MCF 10A (cell line): ENCODE measurements at regions of chr3 and their contacts with region 1.

Region 1: DNA sequence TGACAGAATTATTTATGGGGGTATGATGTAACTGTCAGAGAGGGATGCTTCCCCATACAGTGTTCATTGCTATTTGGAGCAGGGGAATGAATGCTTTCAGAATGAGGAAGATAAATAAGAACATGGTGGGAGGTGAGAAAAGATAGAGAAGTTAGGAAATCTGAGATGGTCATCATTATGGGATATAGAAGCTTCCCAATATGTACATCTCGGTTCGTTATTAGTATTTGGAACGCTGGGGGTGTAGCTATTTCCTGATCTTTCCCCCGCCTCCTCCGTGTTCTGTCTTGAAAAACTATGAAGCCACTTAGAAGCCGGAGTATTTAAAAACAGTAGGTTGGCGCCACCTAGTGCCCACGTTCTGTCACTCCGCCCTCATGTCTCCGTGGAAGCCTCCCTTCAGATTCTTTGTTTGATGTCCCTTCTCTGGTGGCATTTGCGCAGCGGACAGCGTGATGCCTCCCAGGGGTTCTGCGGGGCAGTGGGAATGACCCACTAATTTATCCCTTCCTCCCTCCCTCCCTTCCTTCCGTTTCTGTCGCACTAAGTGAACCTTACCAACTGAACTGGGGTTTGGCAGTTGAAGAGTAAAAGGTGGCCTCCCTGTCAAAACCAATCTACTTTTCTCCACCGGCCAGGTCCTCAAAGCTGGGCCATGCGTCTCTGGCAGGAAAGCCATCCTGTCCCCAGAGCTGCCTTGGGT is 184.5 kb downstream of the FEZF2 start:
- DNase-seq: peak; percentile 70
- H3K4me3 Mint-ChIP-seq: no peak overlapping the region
- H3K27ac Mint-ChIP-seq: no peak overlapping the region
- H3K4me1 Mint-ChIP-seq: peaks cover 15% of the 10 kb centered on the region
- H3K27me3 Mint-ChIP-seq: no peaks in the 10 kb centered on the region
- CTCF ChIP-seq: peak; percentile 72

Region 2: DNA sequence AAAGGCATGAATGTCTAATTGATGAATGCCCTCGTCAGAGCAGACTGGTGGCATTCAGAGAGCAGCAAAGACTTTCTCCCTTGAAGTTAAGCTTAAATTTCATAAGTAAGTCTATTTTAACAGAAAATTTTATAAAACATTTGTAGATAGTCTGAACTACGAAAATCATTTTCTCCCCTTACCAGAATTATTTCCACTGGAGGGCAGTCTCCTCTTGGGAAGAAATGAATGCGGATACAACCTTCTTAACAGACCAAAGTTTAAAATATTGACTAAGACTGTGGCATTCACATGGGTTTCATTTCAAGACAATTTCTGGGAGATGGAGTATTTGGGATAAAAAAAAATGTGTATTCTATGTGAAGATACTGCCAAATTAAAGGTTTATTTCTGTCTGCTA is 1606.5 kb before region 1 on chr3:
- CTCF ChIA-PET with region 1: interaction called, 4 read pairs
- POLR2A ChIA-PET with region 1: no interaction called
- intact Hi-C with region 1: loop called (anchors 10 kb)
- DNase-seq: peak; percentile 35
- H3K4me3 Mint-ChIP-seq: no peak overlapping the region
- H3K27ac Mint-ChIP-seq: no peak overlapping the region
- H3K4me1 Mint-ChIP-seq: no peaks in the 10 kb centered on the region
- H3K27me3 Mint-ChIP-seq: no peaks in the 10 kb centered on the region
- CTCF ChIP-seq: peak; percentile 12

Region 3: DNA sequence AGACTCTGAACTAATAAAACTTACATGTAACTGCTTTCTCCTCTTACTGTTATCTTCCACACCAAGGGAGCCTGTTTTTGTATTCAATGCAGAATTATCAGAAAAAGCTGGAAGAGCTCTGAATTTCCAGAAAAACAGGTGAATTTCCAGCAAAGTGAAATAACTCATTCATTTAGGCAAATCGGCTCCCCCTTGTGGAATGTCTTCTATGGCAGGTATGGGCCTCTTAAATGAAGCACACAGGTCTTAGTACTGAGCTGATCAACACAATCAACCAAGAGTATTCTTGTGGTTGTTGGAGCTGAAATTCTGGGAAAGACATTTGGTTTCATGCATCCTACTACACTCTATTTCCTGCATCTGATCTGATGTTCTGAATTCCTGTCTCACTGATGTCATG is 658.5 kb before region 1 on chr3:
- CTCF ChIA-PET with region 1: interaction called, 10 read pairs
- POLR2A ChIA-PET with region 1: no interaction called
- intact Hi-C with region 1: loop called (anchors 10 kb)
- DNase-seq: peak; percentile 67
- H3K4me3 Mint-ChIP-seq: no peak overlapping the region
- H3K27ac Mint-ChIP-seq: no peak overlapping the region
- H3K4me1 Mint-ChIP-seq: peaks cover 4% of the 10 kb centered on the region
- H3K27me3 Mint-ChIP-seq: no peaks in the 10 kb centered on the region
- CTCF ChIP-seq: peak; percentile 70

Region 4: GRCh38 chr3:61858056-61858455 is 330.8 kb before region 1 on chr3:
- CTCF ChIA-PET with region 1: interaction called, 135 read pairs
- POLR2A ChIA-PET with region 1: interaction called, 4 read pairs
- intact Hi-C with region 1: loop called (anchors 1 kb)
- DNase-seq: peak; percentile 39
- H3K4me3 Mint-ChIP-seq: no peak overlapping the region
- H3K27ac Mint-ChIP-seq: no peak overlapping the region
- H3K4me1 Mint-ChIP-seq: peaks cover 25% of the 10 kb centered on the region
- H3K27me3 Mint-ChIP-seq: no peaks in the 10 kb centered on the region
- CTCF ChIP-seq: peak; percentile 41

Region 5: DNA sequence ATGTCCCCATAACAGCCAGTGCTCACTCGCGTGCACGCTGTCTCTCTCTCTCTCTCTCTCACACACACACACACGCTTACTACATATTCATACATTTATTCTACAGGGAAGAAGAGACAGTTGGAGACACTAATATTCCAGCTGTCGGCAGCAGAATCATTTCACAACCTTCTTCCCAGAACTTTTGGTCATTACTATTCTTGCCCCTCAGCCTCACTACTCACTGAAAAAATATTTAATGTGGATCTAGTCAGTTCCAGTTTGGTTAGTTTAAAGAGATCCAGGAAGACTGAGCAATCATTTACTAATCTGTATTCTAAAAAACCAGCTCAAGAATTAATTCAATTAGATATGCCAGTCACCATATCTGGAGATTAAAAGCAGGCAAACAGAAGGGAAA is 232.6 kb before region 1 on chr3:
- CTCF ChIA-PET with region 1: no interaction called
- POLR2A ChIA-PET with region 1: no interaction called
- intact Hi-C with region 1: loop called (anchors 10 kb)
- DNase-seq: peak; percentile 72
- H3K4me3 Mint-ChIP-seq: peak overlapping the region; percentile 25
- H3K27ac Mint-ChIP-seq: peak overlapping the region; percentile 46
- H3K4me1 Mint-ChIP-seq: peaks cover 19% of the 10 kb centered on the region
- H3K27me3 Mint-ChIP-seq: no peaks in the 10 kb centered on the region
- CTCF ChIP-seq: no peak

Region 6: DNA sequence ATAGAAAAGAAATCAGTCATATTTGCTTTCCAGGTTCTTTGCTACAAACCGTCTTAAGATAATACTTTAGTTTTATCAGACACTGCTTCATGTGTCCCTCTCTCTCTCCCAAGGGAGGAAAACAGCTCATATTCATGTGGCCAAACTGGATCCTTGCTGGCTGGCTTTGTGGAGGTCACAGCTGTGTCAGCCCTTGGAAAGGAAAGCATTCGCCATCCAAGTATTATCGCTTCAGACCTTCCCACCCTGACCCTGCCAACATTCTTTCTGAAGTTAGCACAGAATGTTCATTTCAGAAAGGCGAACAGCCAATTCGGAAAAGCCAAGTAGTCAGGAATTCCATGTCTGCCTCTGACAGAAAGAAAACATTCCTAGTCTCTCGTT is 29.1 kb before region 1 on chr3:
- CTCF ChIA-PET with region 1: interaction called, 10 read pairs
- POLR2A ChIA-PET with region 1: no interaction called
- intact Hi-C with region 1: no loop called
- DNase-seq: no peak
- H3K4me3 Mint-ChIP-seq: no peak overlapping the region
- H3K27ac Mint-ChIP-seq: no peak overlapping the region
- H3K4me1 Mint-ChIP-seq: peaks cover 18% of the 10 kb centered on the region
- H3K27me3 Mint-ChIP-seq: no peaks in the 10 kb centered on the region
- CTCF ChIP-seq: no peak

Region 7: DNA sequence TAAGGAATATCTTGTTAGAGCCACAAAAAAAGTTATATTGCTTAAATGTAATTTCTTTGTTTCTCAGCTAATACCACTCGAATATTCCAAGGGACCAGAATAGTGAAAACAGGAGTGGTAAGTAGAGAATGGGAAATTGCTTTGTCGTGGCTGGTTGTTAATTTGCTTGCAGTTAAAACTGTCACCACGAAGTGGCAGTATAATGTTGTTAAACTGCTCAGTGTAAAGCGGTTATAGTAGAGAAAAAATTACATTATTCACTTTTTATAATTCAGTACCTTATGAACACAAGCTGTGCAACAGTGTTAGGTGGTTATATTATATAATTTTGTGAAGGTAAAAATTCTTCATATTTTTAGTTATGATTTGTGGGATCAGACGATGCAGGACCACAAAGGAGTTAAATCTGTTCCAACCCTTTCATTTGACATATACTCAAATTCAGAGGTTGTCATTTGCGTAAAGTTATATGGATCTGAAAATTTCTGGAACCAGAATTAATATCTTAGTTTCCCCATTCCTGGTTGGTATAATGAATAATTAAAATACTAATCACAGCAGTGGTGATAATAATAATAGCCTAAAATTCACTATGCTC is 12.7 kb after region 1 on chr3:
- CTCF ChIA-PET with region 1: interaction called, 49 read pairs
- POLR2A ChIA-PET with region 1: interaction called, 3 read pairs
- intact Hi-C with region 1: no loop called
- DNase-seq: peak; percentile 41
- H3K4me3 Mint-ChIP-seq: no peak overlapping the region
- H3K27ac Mint-ChIP-seq: no peak overlapping the region
- H3K4me1 Mint-ChIP-seq: no peaks in the 10 kb centered on the region
- H3K27me3 Mint-ChIP-seq: no peaks in the 10 kb centered on the region
- CTCF ChIP-seq: peak; percentile 53

Region 8: GRCh38 chr3:62318750-62319569 is 130.1 kb after region 1 on chr3:
- CTCF ChIA-PET with region 1: no interaction called
- POLR2A ChIA-PET with region 1: no interaction called
- intact Hi-C with region 1: no loop called
- DNase-seq: peak; percentile 22
- H3K4me3 Mint-ChIP-seq: no peak overlapping the region
- H3K27ac Mint-ChIP-seq: no peak overlapping the region
- H3K4me1 Mint-ChIP-seq: no peaks in the 10 kb centered on the region
- H3K27me3 Mint-ChIP-seq: peaks cover 100% of the 10 kb centered on the region
- CTCF ChIP-seq: no peak